Common myeloid progenitor, CD34-positive (primary cell): ENCODE measurements at regions of chr12 and their contacts with region 1.

Region 1: GRCh38 chr12:7859552-7859951 is 13.2 kb downstream of the SLC2A14 start:
- DNase-seq: no peak
- H3K4me3 ChIP-seq: no peak overlapping the region
- H3K27ac ChIP-seq: no peak overlapping the region
- H3K4me1 ChIP-seq: peaks cover 0 to 8% (median 3%) of the 10 kb centered on the region in 4 experiments
- H3K27me3 ChIP-seq: no peaks in the 10 kb centered on the region

Region 2: DNA sequence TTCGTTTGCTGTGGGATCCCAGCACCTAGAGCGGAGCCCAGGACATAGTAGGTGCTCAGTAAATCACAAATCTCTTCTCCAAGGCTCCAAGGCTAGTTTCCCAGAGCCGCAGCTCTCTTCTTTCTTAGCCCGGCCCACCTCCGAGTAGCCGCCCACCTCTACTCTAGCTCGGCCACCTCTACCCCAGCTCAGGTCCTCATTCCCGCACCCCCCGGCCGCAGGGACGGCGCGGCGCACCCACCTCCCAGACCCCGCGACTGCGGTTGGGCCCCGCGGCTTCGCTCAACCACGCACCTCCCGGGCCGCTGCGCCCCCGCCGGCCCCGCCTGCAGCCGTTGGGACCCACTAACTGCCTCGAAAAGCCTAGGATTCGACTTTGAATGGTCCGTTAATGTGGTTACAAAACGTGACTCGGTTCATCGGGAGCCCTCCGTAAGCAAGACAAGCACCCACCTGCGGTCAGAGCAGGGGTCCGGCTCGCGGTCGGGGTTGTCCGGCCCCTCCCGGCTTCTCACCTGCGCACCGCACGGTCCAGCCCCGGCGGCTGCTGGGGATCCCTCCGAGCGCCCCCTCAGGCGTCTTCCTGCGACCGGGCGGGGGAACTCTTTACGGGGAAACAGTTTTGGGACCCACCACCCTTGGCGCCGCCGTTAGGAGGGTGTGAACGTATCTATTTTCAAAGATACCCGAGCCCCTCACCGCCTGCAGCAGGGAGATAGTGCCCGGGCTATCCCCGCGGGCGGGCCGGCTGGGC is 13.2 kb after region 1 on chr12 and contains the start of gene SLC2A14:
- CTCF ChIA-PET with region 1: no interaction called
- POLR2A ChIA-PET with region 1: no interaction called
- DNase-seq: peak; percentile 38 to 78 (median 64)
- H3K4me3 ChIP-seq: peak within 1 kb of the TSS in 4 of 7 experiments; percentile 17 to 75 (median 64)
- H3K27ac ChIP-seq: no peak within 1 kb of the TSS
- H3K4me1 ChIP-seq: peaks cover 0 to 6% (median 0%) of the 10 kb centered on the region in 4 experiments
- H3K27me3 ChIP-seq: peaks cover 2 to 27% (median 7%) of the 10 kb centered on the region in 5 experiments

Region 3: DNA sequence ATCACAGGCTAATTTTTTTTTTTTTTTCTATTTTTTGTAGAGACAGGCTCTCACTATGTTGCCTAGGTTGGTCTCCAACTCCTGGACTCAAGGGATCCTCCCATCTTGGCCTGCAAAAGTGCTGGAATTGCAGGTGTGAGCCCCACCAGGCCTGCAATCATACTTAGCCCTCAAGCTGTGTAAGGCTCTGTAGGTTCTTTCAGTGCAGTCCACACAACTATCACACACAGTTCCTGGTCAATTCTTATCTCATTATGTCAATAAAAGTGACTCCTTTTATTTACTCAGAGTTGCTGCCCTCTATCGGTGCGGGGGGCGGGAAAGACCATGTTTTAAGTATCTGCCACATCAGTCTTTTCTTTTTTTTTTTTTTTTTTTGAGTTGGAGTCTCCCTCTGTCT is 47.5 kb after region 1 on chr12:
- CTCF ChIA-PET with region 1: interaction called, 17 read pairs
- POLR2A ChIA-PET with region 1: no interaction called
- DNase-seq: peak; percentile 59 to 75 (median 68)
- H3K4me3 ChIP-seq: no peak overlapping the region
- H3K27ac ChIP-seq: no peak overlapping the region
- H3K4me1 ChIP-seq: peaks cover 0 to 5% (median 0%) of the 10 kb centered on the region in 4 experiments
- H3K27me3 ChIP-seq: no peaks in the 10 kb centered on the region